Spleen (tissue), 13 donors: ENCODE measurements at regions of chr1 and their contacts with region 1.

Region 1: DNA sequence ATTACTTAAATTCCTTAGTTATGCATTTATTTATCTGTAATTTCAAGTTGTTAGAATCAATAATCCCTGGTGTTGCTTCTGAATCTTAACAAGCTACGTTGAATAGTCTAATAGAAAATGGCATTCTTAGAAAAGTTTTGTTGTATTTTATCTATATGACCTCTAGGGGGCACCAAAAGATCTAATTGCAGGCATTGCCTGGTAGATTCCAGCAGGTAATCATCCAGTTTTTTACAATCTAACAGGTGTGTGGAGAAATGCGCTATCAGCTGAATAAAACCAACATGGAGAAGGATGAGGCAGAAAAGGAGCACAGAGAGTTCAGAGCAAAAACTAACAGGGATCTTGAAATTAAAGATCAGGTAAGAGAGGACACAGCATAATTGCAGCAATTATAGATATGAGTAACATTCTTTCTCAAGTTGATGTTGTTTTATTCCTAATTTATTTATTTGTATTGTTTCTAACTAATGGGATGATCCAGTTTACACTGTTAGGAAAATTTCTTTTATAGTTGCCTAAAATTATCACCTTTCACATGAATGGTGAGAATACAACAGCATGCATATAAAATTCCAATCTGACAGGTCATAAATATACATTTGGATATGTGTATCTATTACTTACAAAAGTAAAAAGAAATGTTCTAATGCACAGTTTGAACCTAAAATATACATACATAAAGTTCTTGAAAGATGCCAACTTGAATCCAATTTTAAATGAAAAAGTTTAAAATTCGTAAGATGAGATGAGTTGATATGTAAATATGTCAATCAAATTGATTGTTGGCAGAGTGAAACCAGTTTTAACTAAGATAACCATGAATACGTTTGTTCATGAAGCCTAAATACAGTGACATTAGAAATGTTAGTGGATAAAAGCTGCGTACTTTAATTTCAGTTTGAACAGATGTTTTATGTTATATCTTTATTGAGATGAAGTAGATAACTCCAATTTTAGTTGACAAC is 88.4 kb downstream of the SDCCAG8 start:
- DNase-seq: no peak
- H3K4me3 ChIP-seq: no peak overlapping the region
- H3K27ac ChIP-seq: peak overlapping the region in 2 of 8 donors; percentile 23 to 24
- H3K4me1 ChIP-seq: peaks cover 0 to 16% (median 6%) of the 10 kb centered on the region in 6 donors
- H3K27me3 ChIP-seq: no peaks in the 10 kb centered on the region
- CTCF ChIP-seq: peak; percentile 19 to 73 (median 55)
- POLR2A ChIP-seq: no peak

Region 2: GRCh38 chr1:243230914-243231313 is 113.3 kb before region 1 on chr1:
- intact Hi-C with region 1: no loop called
- DNase-seq: no peak
- H3K4me3 ChIP-seq: no peak overlapping the region
- H3K27ac ChIP-seq: no peak overlapping the region
- H3K4me1 ChIP-seq: peaks cover 0 to 10% (median 2%) of the 10 kb centered on the region in 6 donors
- H3K27me3 ChIP-seq: no peaks in the 10 kb centered on the region
- CTCF ChIP-seq: no peak
- POLR2A ChIP-seq: no peak

Region 3: GRCh38 chr1:243748706-243749283 is 404.5 kb after region 1 on chr1:
- intact Hi-C with region 1: loop called (anchors 5 kb)
- DNase-seq: no peak
- H3K4me3 ChIP-seq: no peak overlapping the region
- H3K27ac ChIP-seq: peak overlapping the region in 1 of 8 donors; percentile 10
- H3K4me1 ChIP-seq: peaks cover 0 to 24% (median 6%) of the 10 kb centered on the region in 6 donors
- H3K27me3 ChIP-seq: no peaks in the 10 kb centered on the region
- CTCF ChIP-seq: peak; percentile 46 to 87 (median 76)
- POLR2A ChIP-seq: no peak